Transverse colon (tissue), 4 donors: ENCODE measurements at regions of chr19 and their contacts with region 1.

Region 1: DNA sequence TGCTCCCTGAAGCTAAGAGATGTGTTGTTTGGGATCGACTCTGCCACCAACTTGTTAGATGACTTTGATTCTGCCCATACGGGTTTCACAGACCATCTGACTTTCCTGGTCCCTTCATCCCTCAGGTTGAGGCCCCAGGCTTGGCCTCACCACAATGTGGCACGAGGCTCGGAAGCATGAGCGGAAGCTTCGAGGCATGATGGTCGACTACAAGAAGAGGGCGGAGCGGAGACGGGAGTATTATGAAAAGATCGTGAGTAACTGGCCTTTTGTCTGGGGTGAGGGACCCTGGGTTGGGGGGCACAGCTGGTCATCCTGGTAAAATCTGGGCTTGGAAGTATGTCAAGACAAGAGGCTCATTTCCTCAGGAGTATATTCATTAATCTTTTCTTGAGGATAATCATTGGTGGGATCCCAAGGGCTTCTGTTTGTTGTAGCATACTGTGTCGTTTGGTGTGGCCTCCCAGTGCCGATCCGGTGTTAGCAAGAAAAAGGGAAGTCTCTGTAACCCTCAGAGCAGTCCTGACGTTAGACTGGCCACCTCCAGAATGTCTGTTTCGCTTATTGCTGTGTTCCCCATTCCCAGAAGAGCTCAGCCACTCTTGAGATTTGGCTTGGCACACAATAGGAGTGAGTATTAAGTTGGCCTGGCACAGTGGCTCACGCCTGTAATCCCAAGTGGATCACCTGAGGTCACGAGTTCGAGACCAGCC is 1.4 kb downstream of the CLASRP start:
- DNase-seq: no peak
- H3K4me3 ChIP-seq: peak overlapping the region in 2 of 4 donors; percentile 89 to 100
- H3K27ac ChIP-seq: peak overlapping the region; percentile 96 to 100 (median 99)
- H3K4me1 ChIP-seq: peaks cover 18 to 41% (median 27%) of the 10 kb centered on the region in 4 donors
- H3K27me3 ChIP-seq: no peaks in the 10 kb centered on the region
- CTCF ChIP-seq: no peak
- EP300 ChIP-seq: no peak
- POLR2A ChIP-seq: no peak

Region 2: GRCh38 chr19:44988896-44989556 is 51.2 kb before region 1 on chr19:
- in situ Hi-C with region 1: no loop called
- intact Hi-C with region 1: no loop called
- DNase-seq: peak; percentile 80
- H3K4me3 ChIP-seq: no peak overlapping the region
- H3K27ac ChIP-seq: no peak overlapping the region
- H3K4me1 ChIP-seq: no peaks in the 10 kb centered on the region
- H3K27me3 ChIP-seq: no peaks in the 10 kb centered on the region
- CTCF ChIP-seq: peak; percentile 54 to 82 (median 65)
- EP300 ChIP-seq: no peak
- POLR2A ChIP-seq: no peak

Region 3: GRCh38 chr19:45079063-45079910 is 39.1 kb after region 1 on chr19 and contains the start of gene GEMIN7:
- in situ Hi-C with region 1: no loop called
- intact Hi-C with region 1: loop called (anchors 5 kb)
- DNase-seq: peak; percentile 79
- H3K4me3 ChIP-seq: peak within 1 kb of the TSS; percentile 59 to 83 (median 76)
- H3K27ac ChIP-seq: peak within 1 kb of the TSS; percentile 76 to 88 (median 85)
- H3K4me1 ChIP-seq: peaks cover 7 to 51% (median 39%) of the 10 kb centered on the region in 4 donors
- H3K27me3 ChIP-seq: no peaks in the 10 kb centered on the region
- CTCF ChIP-seq: peak in 2 of 5 experiments; percentile 9 to 31
- EP300 ChIP-seq: no peak
- POLR2A ChIP-seq: peak; percentile 53
- total RNA-seq, gene GEMIN7: 3.0 to 21.1 (median 15.9) TPM